ENCODE measurements at regions of chr4 and their contacts with region 1.

Region 1: GRCh38 chr4:46844325-46844917 is 64.6 kb downstream of the COX7B2 start:
- DNase-seq: peak; percentile 30
- ATAC-seq: no peak

Region 2: GRCh38 chr4:47032415-47033106 is 188.1 kb after region 1 on chr4:
- intact Hi-C with region 1: loop called in 1 of 2 experiments (anchors 5 kb)
- DNase-seq: peak; percentile 80
- ATAC-seq: peak; percentile 94 to 98

Region 3: GRCh38 chr4:47122592-47123291 is 278.3 kb after region 1 on chr4:
- intact Hi-C with region 1: loop called in 1 of 2 experiments (anchors 5 kb)
- DNase-seq: peak; percentile 22
- ATAC-seq: peak; percentile 62 to 65

Region 4: GRCh38 chr4:47383829-47384427 is 539.5 kb after region 1 on chr4:
- intact Hi-C with region 1: loop called in 1 of 2 experiments (anchors 5 kb)
- DNase-seq: no peak
- ATAC-seq: peak in 1 of 2 donors; percentile 44